ENCODE measurements at regions of chrX and their contacts with region 1.

Region 1: DNA sequence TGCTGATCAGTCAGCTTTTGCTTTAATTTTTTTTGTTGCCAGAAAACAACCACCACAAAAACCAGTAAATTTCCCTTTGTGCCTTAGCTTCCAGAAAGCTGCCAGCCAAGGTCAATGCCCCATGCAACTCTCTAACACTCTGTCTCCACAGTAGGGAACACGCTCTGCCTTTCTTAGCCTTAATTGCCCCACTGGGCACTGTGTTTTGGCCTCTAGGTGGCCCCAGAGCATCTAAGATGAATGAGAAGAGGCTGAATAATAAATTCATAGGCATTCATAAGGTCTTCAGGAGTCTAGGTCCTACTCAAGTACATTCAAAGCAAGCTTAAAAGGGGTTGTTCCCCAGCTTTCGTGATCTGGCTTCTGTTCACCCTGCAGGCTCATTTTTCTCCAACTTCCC is 57.7 kb upstream of the PASD1 start:
- DNase-seq: no peak
- ATAC-seq: no peak
- H3K4me3 ChIP-seq: no peak overlapping the region
- H3K4me3 Mint-ChIP-seq: no peak overlapping the region
- H3K27ac ChIP-seq: no peak overlapping the region
- H3K27ac Mint-ChIP-seq: no peak overlapping the region
- H3K4me1 ChIP-seq: no peaks in the 10 kb centered on the region
- H3K4me1 Mint-ChIP-seq: no peaks in the 10 kb centered on the region
- H3K27me3 ChIP-seq: no peaks in the 10 kb centered on the region
- H3K27me3 Mint-ChIP-seq: peaks cover 0 to 19% (median 14%) of the 10 kb centered on the region in 5 donors

Region 2: GRCh38 chrX:151458824-151459223 is 47.0 kb before region 1 on chrX:
- CTCF ChIA-PET with region 1: no interaction called
- POLR2A ChIA-PET with region 1: no interaction called
- intact Hi-C with region 1: no loop called
- DNase-seq: no peak
- ATAC-seq: no peak
- H3K4me3 ChIP-seq: no peak overlapping the region
- H3K4me3 Mint-ChIP-seq: no peak overlapping the region
- H3K27ac ChIP-seq: no peak overlapping the region
- H3K27ac Mint-ChIP-seq: no peak overlapping the region
- H3K4me1 ChIP-seq: no peaks in the 10 kb centered on the region
- H3K4me1 Mint-ChIP-seq: no peaks in the 10 kb centered on the region
- H3K27me3 ChIP-seq: no peaks in the 10 kb centered on the region
- H3K27me3 Mint-ChIP-seq: no peaks in the 10 kb centered on the region

Region 3: DNA sequence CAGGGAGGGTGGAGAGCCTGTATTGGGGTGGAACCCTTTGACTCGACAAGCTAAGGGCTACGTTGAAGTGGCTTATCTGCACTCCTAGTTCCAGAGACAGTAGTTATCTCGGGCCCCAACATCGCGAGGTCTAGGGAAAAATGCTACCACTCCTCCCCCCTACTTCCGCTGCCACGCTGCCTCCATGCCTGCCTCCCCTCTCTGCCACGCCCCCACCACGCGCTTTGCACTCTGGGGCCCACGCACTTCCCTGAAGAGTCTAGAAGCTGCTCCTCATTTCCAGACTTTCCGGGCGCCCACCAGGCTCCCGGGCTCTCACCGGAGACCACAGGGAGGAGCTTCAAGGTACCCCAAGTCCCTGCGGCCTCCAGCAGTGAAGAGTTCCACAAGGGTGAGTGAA is 57.7 kb after region 1 on chrX and contains the start of gene PASD1:
- CTCF ChIA-PET with region 1: no interaction called
- POLR2A ChIA-PET with region 1: no interaction called
- intact Hi-C with region 1: no loop called
- DNase-seq: no peak
- ATAC-seq: no peak
- H3K4me3 ChIP-seq: no peak within 1 kb of the TSS
- H3K4me3 Mint-ChIP-seq: no peak within 1 kb of the TSS
- H3K27ac ChIP-seq: no peak within 1 kb of the TSS
- H3K27ac Mint-ChIP-seq: no peak within 1 kb of the TSS
- H3K4me1 ChIP-seq: no peaks in the 10 kb centered on the region
- H3K4me1 Mint-ChIP-seq: no peaks in the 10 kb centered on the region
- H3K27me3 ChIP-seq: no peaks in the 10 kb centered on the region
- H3K27me3 Mint-ChIP-seq: no peaks in the 10 kb centered on the region
- total RNA-seq, gene PASD1: not detected

Region 4: DNA sequence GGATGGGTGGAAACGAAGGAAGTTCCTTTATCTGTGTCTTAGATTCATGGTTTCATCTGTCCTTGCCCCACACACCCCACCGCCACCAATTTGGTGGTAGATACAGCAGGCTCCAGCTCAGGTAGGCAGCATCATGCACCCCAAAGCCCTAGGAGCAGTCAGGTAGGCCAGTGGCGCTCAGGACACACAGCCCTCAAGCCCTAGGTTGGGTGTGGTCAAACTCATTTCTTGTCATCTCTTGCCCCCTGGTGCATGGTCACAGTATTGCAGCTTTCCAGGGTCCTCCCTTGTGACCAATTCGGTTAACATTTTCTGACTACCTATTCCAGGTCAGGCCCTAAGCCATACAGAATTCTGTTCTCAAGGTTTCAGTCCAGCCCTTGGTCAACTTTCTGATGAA is 175.0 kb after region 1 on chrX:
- CTCF ChIA-PET with region 1: no interaction called
- POLR2A ChIA-PET with region 1: no interaction called
- intact Hi-C with region 1: loop called in 1 of 2 experiments (anchors 5 kb)
- DNase-seq: peak in 8 of 9 donors; percentile 9 to 47 (median 31)
- ATAC-seq: peak; percentile 32
- H3K4me3 ChIP-seq: no peak overlapping the region
- H3K4me3 Mint-ChIP-seq: no peak overlapping the region
- H3K27ac ChIP-seq: no peak overlapping the region
- H3K27ac Mint-ChIP-seq: no peak overlapping the region
- H3K4me1 ChIP-seq: no peaks in the 10 kb centered on the region
- H3K4me1 Mint-ChIP-seq: peaks cover 0 to 7% (median 0%) of the 10 kb centered on the region in 7 donors
- H3K27me3 ChIP-seq: no peaks in the 10 kb centered on the region
- H3K27me3 Mint-ChIP-seq: peaks cover 4 to 17% (median 13%) of the 10 kb centered on the region in 5 donors